Activated naive CD4-positive, alpha-beta T cell treated with anti-CD3 and anti-CD28 coated beads for 36 hours (primary cell): ENCODE measurements at regions of chr17 and their contacts with region 1.

Region 1: DNA sequence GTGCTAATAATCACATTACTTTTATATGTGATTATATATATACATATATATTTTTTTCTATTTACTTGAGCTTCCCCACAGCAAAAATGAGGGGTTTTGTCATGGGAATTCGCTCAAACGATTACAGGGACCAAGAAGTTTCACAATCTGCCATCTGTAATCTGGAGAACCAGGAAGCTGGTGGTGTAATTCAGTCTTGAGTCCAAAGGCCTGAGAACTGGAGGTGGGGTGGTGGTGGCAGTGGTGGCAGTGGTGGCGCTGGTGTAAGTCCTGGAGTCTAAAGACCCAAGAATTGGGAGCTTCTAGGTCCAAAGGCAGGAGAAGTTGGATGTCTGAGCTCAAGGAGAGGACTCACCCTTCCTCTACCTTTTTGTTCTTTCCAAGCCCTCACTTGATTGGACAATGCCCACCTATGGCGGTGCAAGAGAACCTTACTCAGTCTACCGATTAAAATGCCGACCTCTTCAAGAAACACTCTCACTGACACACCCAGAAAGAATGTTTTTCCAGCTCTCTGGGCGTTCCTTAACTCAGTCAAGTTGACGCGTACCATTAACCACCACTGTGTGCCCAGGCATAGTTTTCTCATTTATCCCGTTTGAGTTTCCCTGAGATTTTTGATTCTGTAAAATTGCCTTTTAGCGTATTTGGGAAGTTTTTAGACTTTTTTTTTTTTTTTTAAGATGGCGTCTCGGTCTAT is 31.9 kb downstream of the POLR2A start:
- DNase-seq: no peak
- H3K4me3 Mint-ChIP-seq: no peak overlapping the region
- H3K27ac Mint-ChIP-seq: no peak overlapping the region
- H3K4me1 Mint-ChIP-seq: peaks cover 2% of the 10 kb centered on the region
- H3K27me3 Mint-ChIP-seq: no peaks in the 10 kb centered on the region

Region 2: GRCh38 chr17:7548585-7549400 is 32.7 kb after region 1 on chr17 and contains the start of gene TNFSF12:
- CTCF ChIA-PET with region 1: interaction called, 12 read pairs
- intact Hi-C with region 1: no loop called
- DNase-seq: peak; percentile 69
- H3K4me3 Mint-ChIP-seq: peak within 1 kb of the TSS; percentile 77
- H3K27ac Mint-ChIP-seq: peak within 1 kb of the TSS; percentile 33
- H3K4me1 Mint-ChIP-seq: peaks cover 47% of the 10 kb centered on the region
- H3K27me3 Mint-ChIP-seq: no peaks in the 10 kb centered on the region
- total RNA-seq, gene TNFSF12: 5.8 to 7.4 TPM

Region 3: GRCh38 chr17:7589204-7589868 is 73.3 kb after region 1 on chr17:
- CTCF ChIA-PET with region 1: interaction called, 6 read pairs
- intact Hi-C with region 1: loop called (anchors 1 kb)
- DNase-seq: peak; percentile 74
- H3K4me3 Mint-ChIP-seq: no peak overlapping the region
- H3K27ac Mint-ChIP-seq: no peak overlapping the region
- H3K4me1 Mint-ChIP-seq: peaks cover 21% of the 10 kb centered on the region
- H3K27me3 Mint-ChIP-seq: no peaks in the 10 kb centered on the region